ENCODE measurements at regions of chr3 and their contacts with region 1.

Region 1: DNA sequence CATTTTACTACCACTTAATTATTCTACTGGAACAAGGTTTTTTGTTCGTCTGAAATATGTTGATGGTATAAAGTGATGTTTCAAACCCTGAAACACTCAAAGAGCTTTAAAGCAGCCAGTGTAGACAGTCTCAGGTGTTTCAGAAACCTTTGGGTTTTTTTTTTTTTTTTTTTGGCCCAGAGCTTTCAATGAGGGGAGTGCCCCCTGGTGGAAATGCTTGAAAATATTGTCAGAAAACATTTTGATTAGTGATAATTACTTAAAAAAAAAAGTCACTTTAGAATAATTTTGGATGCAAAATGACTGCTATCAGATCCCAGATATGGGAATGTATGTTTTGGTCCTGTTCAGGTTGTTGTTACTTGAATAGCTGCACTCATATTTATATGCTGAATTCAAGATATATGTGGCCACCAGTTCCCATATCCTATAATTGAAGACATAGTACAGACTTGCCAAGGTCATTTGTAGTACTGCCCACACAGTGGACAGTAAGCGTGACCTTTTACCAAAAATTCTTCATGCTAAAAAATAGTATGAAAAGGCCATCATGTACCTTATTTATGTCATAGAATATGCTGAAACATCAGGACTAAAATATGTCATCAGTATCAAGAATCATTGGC is 35.9 kb downstream of the SATB1 start:
- DNase-seq: peak; percentile 74
- H3K4me3 Mint-ChIP-seq: peak overlapping the region; percentile 23
- H3K27ac Mint-ChIP-seq: peak overlapping the region; percentile 37
- H3K4me1 Mint-ChIP-seq: peaks cover 53% of the 10 kb centered on the region
- H3K27me3 Mint-ChIP-seq: no peaks in the 10 kb centered on the region

Region 2: DNA sequence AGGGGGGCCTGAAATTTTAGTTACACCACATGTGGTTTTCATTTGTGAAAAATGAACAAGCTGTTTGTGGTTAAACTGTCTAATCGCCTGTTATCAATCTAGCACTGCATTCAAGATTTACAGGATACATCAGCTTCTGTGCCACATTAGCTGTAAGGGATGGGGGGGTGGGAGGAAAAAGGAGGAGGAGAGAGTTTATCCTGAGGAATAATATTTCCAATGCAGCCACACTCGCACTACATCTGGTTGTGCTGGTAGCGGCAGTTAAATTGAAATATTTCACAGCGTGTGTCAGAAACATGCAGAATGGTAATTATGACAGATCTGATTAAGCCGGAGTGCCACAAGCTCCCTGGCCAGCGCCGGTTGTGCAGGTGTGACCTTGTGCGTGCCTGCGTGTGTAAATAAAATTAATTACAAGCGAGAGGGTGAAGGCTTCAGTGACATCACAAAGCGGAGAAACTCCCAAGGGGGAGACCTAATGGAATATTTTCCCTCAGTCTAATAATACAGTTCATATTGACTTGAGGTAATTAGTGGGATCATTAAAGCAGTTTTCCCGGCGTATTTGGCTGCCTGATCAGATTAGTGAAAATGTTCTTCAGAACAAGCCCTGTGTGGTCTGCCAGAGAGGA is 19.6 kb before region 1 on chr3:
- intact Hi-C with region 1: loop called (anchors 2 kb)
- DNase-seq: no peak
- H3K4me3 Mint-ChIP-seq: no peak overlapping the region
- H3K27ac Mint-ChIP-seq: peak overlapping the region; percentile 63
- H3K4me1 Mint-ChIP-seq: peaks cover 62% of the 10 kb centered on the region
- H3K27me3 Mint-ChIP-seq: no peaks in the 10 kb centered on the region

Region 3: GRCh38 chr3:18411541-18411940 is 22.3 kb after region 1 on chr3:
- intact Hi-C with region 1: loop called (anchors 2 kb)
- DNase-seq: peak; percentile 62
- H3K4me3 Mint-ChIP-seq: peak overlapping the region; percentile 70
- H3K27ac Mint-ChIP-seq: peak overlapping the region; percentile 79
- H3K4me1 Mint-ChIP-seq: peaks cover 75% of the 10 kb centered on the region
- H3K27me3 Mint-ChIP-seq: no peaks in the 10 kb centered on the region

Measured in activated CD4-positive, alpha-beta T cell treated with anti-CD3 and anti-CD28 coated beads, Interleukin-2, amount 10 ng/mL, durations not matched to agents 24 days and 14 days (primary cell).